A673 (cell line): ENCODE measurements at regions of chr3 and their contacts with region 1.

Region 1: GRCh38 chr3:167734498-167735232 is at the start of gene PDCD10:
- DNase-seq: peak; percentile 99
- H3K4me3 ChIP-seq: peak within 1 kb of the TSS; percentile 74
- H3K27ac ChIP-seq: peak within 1 kb of the TSS; percentile 77
- H3K4me1 ChIP-seq: peaks cover 12% of the 10 kb centered on the region
- H3K27me3 ChIP-seq: peaks cover 13% of the 10 kb centered on the region
- CTCF ChIP-seq: no peak
- total RNA-seq, gene PDCD10: 43.9 and 47.0 TPM in 2 replicates

Region 2: GRCh38 chr3:167380004-167380689 is 354.5 kb before region 1 on chr3 and contains the start of gene ZBBX:
- CTCF ChIA-PET with region 1: no interaction called
- POLR2A ChIA-PET with region 1: no interaction called
- intact Hi-C with region 1: loop called (anchors 5 kb)
- DNase-seq: peak; percentile 90
- H3K4me3 ChIP-seq: peak within 1 kb of the TSS; percentile 38
- H3K27ac ChIP-seq: no peak within 1 kb of the TSS
- H3K4me1 ChIP-seq: no peaks in the 10 kb centered on the region
- H3K27me3 ChIP-seq: no peaks in the 10 kb centered on the region
- CTCF ChIP-seq: peak; percentile 94
- total RNA-seq, gene ZBBX: not detected in 2 replicates